ENCODE measurements at regions of chr13 and their contacts with region 1.

Region 1: GRCh38 chr13:98890186-98890585 is 87.7 kb downstream of the DOCK9 start:
- DNase-seq: no peak
- H3K4me3 ChIP-seq: no peak overlapping the region
- H3K27ac ChIP-seq: no peak overlapping the region
- H3K4me1 ChIP-seq: no peaks in the 10 kb centered on the region
- H3K27me3 ChIP-seq: no peaks in the 10 kb centered on the region
- CTCF ChIP-seq: no peak

Region 2: DNA sequence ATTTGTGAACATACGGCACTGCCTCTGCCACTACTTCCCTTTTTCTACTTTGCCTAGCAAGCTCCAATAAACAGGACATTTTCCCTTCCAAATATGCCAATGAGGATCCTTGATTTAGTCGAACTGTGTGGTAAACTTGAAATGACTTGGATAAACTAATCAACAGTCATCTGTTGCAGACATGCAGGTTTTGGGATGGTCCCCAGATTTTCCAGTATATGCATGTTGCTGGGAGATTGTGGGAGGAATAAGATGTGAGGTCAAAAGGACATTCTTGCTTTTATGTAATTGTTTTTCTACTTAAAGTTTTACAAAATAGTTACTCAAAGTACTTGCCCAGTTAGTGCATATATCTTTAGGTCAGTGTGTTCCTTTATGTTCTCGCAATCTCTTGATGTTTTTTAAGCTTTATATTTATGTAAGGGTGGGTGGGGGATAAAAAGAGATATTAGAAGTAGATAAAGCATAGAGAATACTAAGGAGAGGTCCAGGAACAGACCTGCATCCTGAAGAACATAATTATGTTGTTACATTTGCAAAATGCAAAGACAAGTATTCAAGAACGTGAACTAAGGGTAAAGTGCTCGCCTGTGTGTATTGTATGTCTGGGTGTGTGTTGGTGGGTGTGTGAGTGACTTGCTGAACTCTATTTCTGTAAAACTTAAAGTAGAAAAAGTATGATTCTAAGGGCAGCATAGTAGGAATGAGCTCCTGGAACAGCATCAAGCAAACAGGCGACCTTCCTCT is 1807.6 kb before region 1 on chr13:
- intact Hi-C with region 1: loop called (anchors 5 kb)
- DNase-seq: no peak
- H3K4me3 ChIP-seq: no peak overlapping the region
- H3K27ac ChIP-seq: no peak overlapping the region
- H3K4me1 ChIP-seq: no peaks in the 10 kb centered on the region
- H3K27me3 ChIP-seq: no peaks in the 10 kb centered on the region
- CTCF ChIP-seq: no peak